OCI-LY7 (cell line): ENCODE measurements at regions of chr1 and their contacts with region 1.

Region 1: DNA sequence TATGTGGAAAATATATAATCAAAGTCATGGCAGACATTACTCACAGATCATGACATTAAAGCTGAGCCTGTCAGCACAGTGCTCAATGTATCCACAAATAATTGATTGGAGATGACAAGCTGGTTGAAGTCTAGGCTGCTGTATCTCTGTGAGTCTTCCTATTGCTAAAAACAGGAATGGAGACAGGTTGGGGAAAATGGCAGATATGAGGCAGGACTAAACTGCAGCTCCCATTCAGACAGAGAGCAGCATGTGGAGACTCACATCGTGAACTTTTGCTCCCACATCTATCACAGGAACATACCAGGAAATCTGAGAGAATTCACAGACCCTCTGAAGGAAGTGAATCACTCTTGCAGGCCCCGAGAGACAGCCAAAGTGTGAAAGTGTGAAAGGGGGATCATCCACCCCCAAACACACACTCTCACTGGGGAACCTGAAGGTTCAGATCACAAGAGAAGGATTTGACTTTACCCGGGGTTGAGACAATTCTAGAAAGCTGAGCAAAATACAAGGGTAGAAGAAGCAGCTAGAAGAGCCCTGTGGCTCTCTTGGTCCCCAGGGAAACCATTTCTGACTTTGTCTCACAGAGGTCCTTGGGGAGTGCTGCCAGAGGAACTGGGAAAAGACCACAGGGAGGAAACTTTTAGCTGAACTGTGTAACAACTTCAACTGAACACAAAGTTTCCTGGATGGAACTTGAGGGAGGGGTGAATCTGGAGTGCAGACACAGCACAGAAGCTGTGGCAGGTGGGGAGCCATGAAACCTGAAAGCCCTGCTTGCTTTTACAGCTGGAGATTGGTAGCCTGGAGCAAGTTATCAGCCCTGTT is 173.4 kb downstream of the S1PR1 start:
- DNase-seq: peak; percentile 30
- H3K4me3 ChIP-seq: no peak overlapping the region
- H3K27ac ChIP-seq: no peak overlapping the region
- H3K4me1 ChIP-seq: peaks cover 55% of the 10 kb centered on the region
- CTCF ChIP-seq: no peak

Region 2: GRCh38 chr1:101247404-101248287 is 162.6 kb before region 1 on chr1:
- CTCF ChIA-PET with region 1: no interaction called
- POLR2A ChIA-PET with region 1: no interaction called
- intact Hi-C with region 1: loop called (anchors 2 kb)
- DNase-seq: peak; percentile 95
- H3K4me3 ChIP-seq: peak overlapping the region; percentile 36
- H3K27ac ChIP-seq: peak overlapping the region; percentile 85
- H3K4me1 ChIP-seq: peaks cover 63% of the 10 kb centered on the region
- CTCF ChIP-seq: no peak

Region 3: DNA sequence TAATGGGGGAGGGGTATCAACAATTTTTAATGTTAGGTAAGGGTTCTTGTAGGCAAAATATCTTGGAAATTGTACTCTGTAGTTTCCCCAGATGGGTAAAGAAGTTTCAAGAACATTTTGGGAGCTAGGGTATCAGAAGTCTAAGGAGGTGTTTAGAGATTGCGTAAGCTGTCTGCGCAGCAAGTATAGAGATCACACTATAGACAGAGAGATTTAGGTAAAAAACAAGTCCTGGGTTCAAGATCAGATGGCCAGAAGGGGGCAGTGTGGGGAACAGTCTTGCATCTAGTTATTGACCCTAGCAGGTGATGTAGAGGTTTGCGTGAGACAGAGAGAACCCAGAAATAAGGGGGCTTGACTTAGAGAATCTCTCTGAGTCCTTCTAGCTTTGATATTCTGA is 92.7 kb before region 1 on chr1:
- CTCF ChIA-PET with region 1: no interaction called
- POLR2A ChIA-PET with region 1: no interaction called
- intact Hi-C with region 1: no loop called
- DNase-seq: no peak
- H3K4me3 ChIP-seq: no peak overlapping the region
- H3K27ac ChIP-seq: no peak overlapping the region
- H3K4me1 ChIP-seq: no peaks in the 10 kb centered on the region
- CTCF ChIP-seq: peak; percentile 49; the same call in 1 of the 2 replicates

Region 4: GRCh38 chr1:101357444-101357986 is 52.7 kb before region 1 on chr1:
- CTCF ChIA-PET with region 1: no interaction called
- POLR2A ChIA-PET with region 1: interaction called, 4 read pairs
- intact Hi-C with region 1: loop called (anchors 5 kb)
- DNase-seq: peak; percentile 77
- H3K4me3 ChIP-seq: no peak overlapping the region
- H3K27ac ChIP-seq: no peak overlapping the region
- H3K4me1 ChIP-seq: no peaks in the 10 kb centered on the region
- CTCF ChIP-seq: peak; percentile 95

Region 5: DNA sequence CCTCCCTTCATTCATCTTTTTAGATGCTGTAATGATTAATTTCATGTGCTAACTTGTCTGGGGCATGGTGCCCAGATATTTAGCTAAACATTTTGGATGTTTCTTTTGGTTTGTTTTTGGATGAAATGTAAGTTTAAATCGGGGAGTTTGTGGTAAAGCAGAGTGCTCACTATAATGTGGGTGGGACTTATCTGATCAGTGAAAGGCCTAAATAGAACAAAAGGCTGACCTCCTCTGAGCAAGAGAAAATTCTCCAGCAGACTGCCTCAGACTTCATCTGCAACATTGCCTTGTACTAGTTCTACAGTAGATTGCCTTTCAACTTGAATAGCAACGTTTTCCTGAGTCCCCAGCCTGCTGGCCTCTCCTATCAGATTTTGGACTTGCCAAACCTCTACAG is 10.1 kb after region 1 on chr1:
- CTCF ChIA-PET with region 1: no interaction called
- POLR2A ChIA-PET with region 1: interaction called, 13 read pairs
- intact Hi-C with region 1: no loop called
- DNase-seq: no peak
- H3K4me3 ChIP-seq: no peak overlapping the region
- H3K27ac ChIP-seq: no peak overlapping the region
- H3K4me1 ChIP-seq: no peaks in the 10 kb centered on the region
- CTCF ChIP-seq: no peak